ENCODE measurements at regions of chr1 and their contacts with region 1.

Region 1: GRCh38 chr1:11784993-11785769 is 20.6 kb downstream of the MTHFR start:
- DNase-seq: no peak
- H3K4me3 ChIP-seq: peak overlapping the region; percentile 36
- H3K27ac ChIP-seq: no peak overlapping the region
- H3K27me3 ChIP-seq: no peaks in the 10 kb centered on the region
- CTCF ChIP-seq: peak; percentile 79

Region 2: GRCh38 chr1:11615090-11615489 is 170.1 kb before region 1 on chr1:
- CTCF ChIA-PET with region 1: no interaction called
- POLR2A ChIA-PET with region 1: no interaction called
- DNase-seq: no peak
- H3K4me3 ChIP-seq: no peak overlapping the region
- H3K27ac ChIP-seq: no peak overlapping the region
- H3K27me3 ChIP-seq: no peaks in the 10 kb centered on the region
- CTCF ChIP-seq: no peak

Region 3: DNA sequence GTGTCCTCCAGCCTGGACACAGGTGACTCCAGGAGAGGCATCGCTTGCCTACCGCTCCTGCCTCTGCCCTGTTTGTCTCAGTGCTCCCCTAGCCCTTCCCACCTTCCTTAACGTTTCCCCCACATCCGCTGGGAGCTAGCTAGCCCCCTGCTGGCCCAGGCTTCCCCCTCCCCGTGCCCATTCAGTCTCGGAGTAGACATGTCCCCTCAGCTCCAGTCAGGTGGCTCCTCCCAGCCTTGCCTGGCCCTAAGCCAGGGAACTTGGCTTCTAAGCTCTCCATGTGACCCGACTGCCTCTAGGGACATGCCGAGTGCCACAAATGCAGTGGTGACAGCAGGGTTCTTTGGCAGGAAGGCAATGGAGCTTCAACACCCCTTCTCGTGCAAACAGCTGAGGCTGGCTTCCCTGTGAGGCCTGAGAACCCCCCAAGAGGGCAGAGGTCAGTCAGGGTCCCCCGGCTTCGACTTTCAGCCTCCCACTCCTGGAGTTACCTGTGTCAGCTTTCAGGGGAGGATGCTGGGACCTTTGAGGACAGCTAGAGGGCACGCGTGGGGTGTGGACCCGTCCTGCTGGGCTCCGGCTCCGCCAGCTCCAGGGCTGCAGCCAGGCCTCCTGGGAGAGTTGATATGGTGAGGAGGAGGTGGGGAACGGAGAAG is 77.4 kb before region 1 on chr1:
- CTCF ChIA-PET with region 1: no interaction called
- POLR2A ChIA-PET with region 1: no interaction called
- DNase-seq: no peak
- H3K4me3 ChIP-seq: no peak overlapping the region
- H3K27ac ChIP-seq: no peak overlapping the region
- H3K27me3 ChIP-seq: peaks cover 21% of the 10 kb centered on the region
- CTCF ChIP-seq: no peak

Region 4: DNA sequence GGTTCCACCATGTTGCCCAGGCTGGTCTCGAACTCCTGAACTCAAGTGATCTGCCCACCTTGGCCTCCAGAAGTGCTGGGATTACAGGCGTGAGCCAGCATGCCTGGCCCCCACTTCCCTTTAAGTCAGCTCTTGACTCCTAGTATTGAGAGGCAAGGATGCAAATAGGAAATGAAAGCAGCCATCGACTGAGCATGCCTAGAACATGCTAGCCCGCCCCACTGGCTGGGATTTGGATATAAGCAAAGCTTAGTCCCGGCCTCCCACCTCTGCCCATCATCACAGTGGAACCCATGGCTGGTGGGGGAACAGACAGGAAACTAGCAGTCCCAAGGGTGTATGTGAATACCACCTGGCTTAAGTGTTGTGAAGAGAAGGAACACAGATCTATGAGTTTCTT is 12.7 kb before region 1 on chr1:
- CTCF ChIA-PET with region 1: interaction called, 10 read pairs
- POLR2A ChIA-PET with region 1: no interaction called
- DNase-seq: no peak
- H3K4me3 ChIP-seq: no peak overlapping the region
- H3K27ac ChIP-seq: no peak overlapping the region
- H3K27me3 ChIP-seq: peaks cover 11% of the 10 kb centered on the region
- CTCF ChIP-seq: no peak

Region 5: GRCh38 chr1:11797525-11798216 is 12.5 kb after region 1 on chr1:
- CTCF ChIA-PET with region 1: interaction called, 32 read pairs
- POLR2A ChIA-PET with region 1: no interaction called
- DNase-seq: no peak
- H3K4me3 ChIP-seq: no peak overlapping the region
- H3K27ac ChIP-seq: no peak overlapping the region
- H3K27me3 ChIP-seq: no peaks in the 10 kb centered on the region
- CTCF ChIP-seq: no peak

Region 6: GRCh38 chr1:11805447-11806306 is 20.5 kb after region 1 on chr1 and contains the starts of genes CLCN6 and MTHFR:
- CTCF ChIA-PET with region 1: interaction called, 32 read pairs
- POLR2A ChIA-PET with region 1: interaction called, 6 read pairs
- DNase-seq: peak; percentile 97
- H3K4me3 ChIP-seq: peak within 1 kb of the TSS; percentile 84
- H3K27ac ChIP-seq: peak within 1 kb of the TSS; percentile 94
- H3K27me3 ChIP-seq: no peaks in the 10 kb centered on the region
- CTCF ChIP-seq: no peak
- polyA plus RNA-seq, gene CLCN6: 9.0 and 10.7 TPM in 2 replicates
- polyA plus RNA-seq, gene MTHFR: 7.7 and 8.8 TPM in 2 replicates

Region 7: GRCh38 chr1:11817192-11817591 is 32.0 kb after region 1 on chr1:
- CTCF ChIA-PET with region 1: no interaction called
- POLR2A ChIA-PET with region 1: no interaction called
- DNase-seq: no peak
- H3K4me3 ChIP-seq: no peak overlapping the region
- H3K27ac ChIP-seq: no peak overlapping the region
- H3K27me3 ChIP-seq: no peaks in the 10 kb centered on the region
- CTCF ChIP-seq: no peak

Region 8: GRCh38 chr1:12014141-12014991 is 229.2 kb after region 1 on chr1:
- CTCF ChIA-PET with region 1: no interaction called
- POLR2A ChIA-PET with region 1: no interaction called
- DNase-seq: no peak
- H3K4me3 ChIP-seq: no peak overlapping the region
- H3K27ac ChIP-seq: no peak overlapping the region
- H3K27me3 ChIP-seq: no peaks in the 10 kb centered on the region
- CTCF ChIP-seq: peak; percentile 14; the same call in 1 of the 2 replicates